ENCODE measurements at regions of chr19 and their contacts with region 1.

Region 1: DNA sequence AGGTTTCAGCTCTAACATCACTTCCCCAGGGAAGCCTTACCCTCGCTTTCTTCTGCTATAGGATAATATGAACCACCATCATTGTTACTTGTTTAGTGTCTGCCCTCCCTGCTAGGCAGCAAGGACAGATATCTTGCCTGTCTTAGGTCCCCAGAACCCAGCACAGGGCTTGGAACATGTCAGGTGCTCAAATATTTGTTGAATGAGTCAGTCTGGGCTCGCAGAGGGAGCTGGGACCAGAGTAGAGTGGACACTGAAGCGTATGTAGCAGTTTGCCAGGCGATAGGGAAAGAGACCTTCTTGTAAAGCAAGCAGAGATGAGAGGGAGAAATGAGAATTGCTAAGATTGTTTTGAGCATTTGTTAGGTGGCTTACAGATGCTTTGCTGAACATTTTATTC is 11.7 kb downstream of the BCKDHA start:
- DNase-seq: peak; percentile 58
- H3K4me3 ChIP-seq: no peak overlapping the region
- H3K27ac ChIP-seq: no peak overlapping the region
- H3K4me1 ChIP-seq: peaks cover 22% of the 10 kb centered on the region
- H3K27me3 ChIP-seq: no peaks in the 10 kb centered on the region
- CTCF ChIP-seq: no peak

Region 2: DNA sequence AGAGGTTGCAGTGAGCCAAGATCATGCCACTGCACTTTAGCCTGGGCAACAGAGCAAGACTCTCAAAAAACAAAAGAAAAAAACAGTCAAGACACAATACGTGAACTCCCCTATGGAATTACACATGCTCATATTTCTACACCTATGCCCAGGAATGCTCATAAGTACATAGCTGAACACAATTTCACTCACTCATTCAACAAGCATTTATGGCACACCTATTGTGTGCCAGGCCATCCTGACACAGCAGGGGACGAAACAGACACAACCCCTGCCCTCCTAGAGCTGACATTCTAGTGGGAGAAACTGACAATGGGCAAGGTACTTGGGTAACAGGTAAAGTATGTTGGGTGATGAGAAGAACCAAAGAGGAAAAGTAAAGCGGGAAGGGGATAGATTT is 180.8 kb before region 1 on chr19:
- CTCF ChIA-PET with region 1: interaction called, 26 read pairs
- dilution Hi-C with region 1: no loop called
- in situ Hi-C with region 1: no loop called
- intact Hi-C with region 1: no loop called
- DNase-seq: no peak
- H3K4me3 ChIP-seq: no peak overlapping the region
- H3K27ac ChIP-seq: no peak overlapping the region
- H3K4me1 ChIP-seq: peaks cover 31% of the 10 kb centered on the region
- H3K27me3 ChIP-seq: no peaks in the 10 kb centered on the region
- CTCF ChIP-seq: no peak

Region 3: GRCh38 chr19:41239363-41239762 is 169.9 kb before region 1 on chr19:
- CTCF ChIA-PET with region 1: no interaction called
- dilution Hi-C with region 1: no loop called
- in situ Hi-C with region 1: no loop called
- intact Hi-C with region 1: no loop called
- DNase-seq: no peak
- H3K4me3 ChIP-seq: no peak overlapping the region
- H3K27ac ChIP-seq: no peak overlapping the region
- H3K4me1 ChIP-seq: no peaks in the 10 kb centered on the region
- H3K27me3 ChIP-seq: no peaks in the 10 kb centered on the region
- CTCF ChIP-seq: no peak

Region 4: GRCh38 chr19:41397086-41398049 is 11.9 kb before region 1 on chr19 and contains the starts of genes BCKDHA and EXOSC5:
- CTCF ChIA-PET with region 1: no interaction called
- dilution Hi-C with region 1: no loop called
- in situ Hi-C with region 1: no loop called
- intact Hi-C with region 1: loop called (anchors 1 kb)
- DNase-seq: peak; percentile 99
- H3K4me3 ChIP-seq: peak within 1 kb of the TSS; percentile 90 to 97 (median 94)
- H3K27ac ChIP-seq: peak within 1 kb of the TSS; percentile 97
- H3K4me1 ChIP-seq: peaks cover 7% of the 10 kb centered on the region
- H3K27me3 ChIP-seq: no peaks in the 10 kb centered on the region
- CTCF ChIP-seq: no peak
- total RNA-seq, gene BCKDHA: 13.5 to 36.5 TPM
- total RNA-seq, gene EXOSC5: 16.5 to 17.3 TPM